A673 (cell line): ENCODE measurements at regions of chr11 and their contacts with region 1.

Region 1: DNA sequence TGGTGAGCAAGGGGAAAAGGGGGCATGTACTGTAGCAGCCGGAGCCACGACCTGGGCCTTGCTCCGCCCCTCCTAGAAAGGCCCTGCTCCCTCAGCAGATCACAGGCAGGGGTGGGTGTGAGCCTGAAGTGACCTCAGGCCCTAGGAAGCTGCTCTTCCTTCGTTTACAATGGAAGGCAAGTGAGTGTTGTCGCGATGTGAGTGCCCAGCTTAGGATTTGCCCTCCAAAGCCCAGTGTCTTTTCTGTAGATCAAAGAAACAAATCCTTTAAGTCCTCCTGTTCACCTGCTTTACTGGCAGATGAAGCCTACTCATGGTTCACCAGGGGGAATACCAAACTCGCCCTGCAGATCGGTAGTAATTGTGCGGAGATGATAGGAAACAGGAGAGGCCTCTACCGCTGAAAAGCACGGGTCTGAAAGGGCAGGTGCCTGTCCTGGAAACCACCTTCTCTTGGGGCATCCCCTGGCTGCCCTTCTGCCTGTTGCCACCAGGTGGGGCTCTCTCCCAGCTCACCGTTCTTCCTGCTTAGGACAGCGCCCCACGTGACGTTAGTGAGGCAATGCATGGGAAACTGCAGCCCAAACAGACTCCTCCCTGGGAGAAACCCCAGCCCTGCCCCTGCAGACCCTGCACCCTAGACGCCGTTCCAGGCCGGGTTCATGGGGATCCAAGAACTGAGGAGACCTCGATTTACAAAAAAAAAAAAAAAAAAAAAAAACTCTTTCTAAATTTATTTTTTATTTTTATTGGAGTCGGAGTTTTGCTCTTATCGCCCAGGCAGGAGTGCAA is 45.9 kb upstream of the RAB1B start:
- DNase-seq: peak; percentile 96
- H3K4me3 ChIP-seq: no peak overlapping the region
- H3K27ac ChIP-seq: no peak overlapping the region
- H3K4me1 ChIP-seq: no peaks in the 10 kb centered on the region
- H3K27me3 ChIP-seq: no peaks in the 10 kb centered on the region
- CTCF ChIP-seq: peak; percentile 100

Region 2: DNA sequence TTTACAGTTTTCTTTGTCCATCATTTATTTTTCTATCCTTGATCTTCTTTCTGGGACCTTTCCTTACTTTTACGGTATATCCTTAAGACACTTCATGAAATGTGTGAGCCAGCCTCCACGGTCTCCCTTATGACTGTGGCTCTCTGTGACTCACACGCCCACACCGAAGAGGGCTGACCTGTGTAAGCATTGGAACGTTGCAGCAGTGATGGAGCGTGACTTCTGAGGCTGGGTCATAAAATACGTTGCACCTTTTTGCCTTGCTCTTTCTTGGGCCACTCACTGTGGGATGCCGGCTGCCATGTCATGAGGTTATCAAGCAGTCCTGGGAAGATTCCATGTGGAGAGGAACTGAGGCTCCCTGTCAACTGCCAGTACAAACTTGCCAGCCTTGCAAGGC is 50.4 kb before region 1 on chr11:
- CTCF ChIA-PET with region 1: no interaction called
- POLR2A ChIA-PET with region 1: no interaction called
- intact Hi-C with region 1: no loop called
- DNase-seq: no peak
- H3K4me3 ChIP-seq: no peak overlapping the region
- H3K27ac ChIP-seq: no peak overlapping the region
- H3K4me1 ChIP-seq: no peaks in the 10 kb centered on the region
- H3K27me3 ChIP-seq: no peaks in the 10 kb centered on the region
- CTCF ChIP-seq: no peak

Region 3: DNA sequence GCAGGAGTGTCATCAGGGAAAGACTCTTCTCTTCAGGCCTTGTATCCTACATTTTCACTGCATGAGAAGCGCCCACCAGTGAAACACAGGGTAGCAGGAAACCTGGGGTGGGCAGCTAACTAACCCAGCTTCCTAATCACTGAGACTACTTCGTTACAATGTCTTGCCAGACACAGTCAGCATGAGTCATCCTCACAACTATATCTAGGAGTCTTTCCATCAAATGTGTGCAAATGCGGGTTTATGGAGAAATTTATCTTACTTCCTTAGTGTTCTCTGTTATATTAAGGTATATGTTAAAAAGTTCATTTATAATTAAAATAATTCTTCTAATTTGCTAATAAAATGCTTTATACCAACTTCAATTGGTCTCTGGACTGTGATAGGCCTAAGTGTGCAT is 34.0 kb before region 1 on chr11:
- CTCF ChIA-PET with region 1: interaction called, 11 read pairs
- POLR2A ChIA-PET with region 1: no interaction called
- intact Hi-C with region 1: no loop called
- DNase-seq: peak; percentile 36
- H3K4me3 ChIP-seq: no peak overlapping the region
- H3K27ac ChIP-seq: no peak overlapping the region
- H3K4me1 ChIP-seq: peaks cover 16% of the 10 kb centered on the region
- H3K27me3 ChIP-seq: no peaks in the 10 kb centered on the region
- CTCF ChIP-seq: no peak

Region 4: DNA sequence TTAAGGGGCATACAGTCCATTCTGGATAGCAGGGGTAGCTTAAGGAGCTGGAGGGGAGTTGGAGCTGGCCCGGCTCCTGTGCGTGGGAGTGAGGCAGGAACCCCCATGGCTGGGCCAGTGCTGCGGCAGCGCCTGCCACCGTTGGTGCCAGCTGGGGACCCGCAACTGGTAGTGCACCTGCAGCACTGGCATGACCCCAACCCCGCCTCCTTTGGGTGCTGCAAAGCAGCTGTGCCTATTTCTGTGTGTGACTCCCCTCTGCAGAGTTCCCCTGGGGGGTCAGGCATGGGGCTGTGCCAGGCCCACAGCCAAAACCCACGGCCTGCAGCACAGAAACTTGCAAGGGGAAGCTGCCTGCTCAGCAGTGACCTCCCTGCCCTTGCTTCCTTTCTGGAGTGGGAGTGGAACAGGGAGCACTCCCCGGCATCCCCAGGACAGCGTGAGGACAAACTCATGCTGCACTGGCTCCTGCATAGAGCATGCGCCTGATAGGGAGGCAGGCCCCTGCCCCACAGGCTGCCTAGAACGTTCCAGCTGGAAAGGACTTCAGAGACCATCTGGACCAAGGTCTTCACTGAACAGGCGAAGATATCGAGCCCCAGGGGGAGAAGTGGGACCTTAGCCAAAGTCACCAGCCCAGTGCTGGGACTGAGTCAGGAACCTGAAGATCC is 19.7 kb after region 1 on chr11:
- CTCF ChIA-PET with region 1: interaction called, 3 read pairs
- POLR2A ChIA-PET with region 1: interaction called, 20 read pairs
- intact Hi-C with region 1: no loop called
- DNase-seq: no peak
- H3K4me3 ChIP-seq: no peak overlapping the region
- H3K27ac ChIP-seq: no peak overlapping the region
- H3K4me1 ChIP-seq: no peaks in the 10 kb centered on the region
- H3K27me3 ChIP-seq: no peaks in the 10 kb centered on the region
- CTCF ChIP-seq: no peak

Region 5: GRCh38 chr11:66258473-66258893 is 35.9 kb after region 1 on chr11:
- CTCF ChIA-PET with region 1: interaction called, 3 read pairs
- POLR2A ChIA-PET with region 1: no interaction called
- intact Hi-C with region 1: loop called (anchors 1 kb)
- DNase-seq: no peak
- H3K4me3 ChIP-seq: peak overlapping the region; percentile 99
- H3K27ac ChIP-seq: peak overlapping the region; percentile 73
- H3K4me1 ChIP-seq: peaks cover 12% of the 10 kb centered on the region
- H3K27me3 ChIP-seq: no peaks in the 10 kb centered on the region
- CTCF ChIP-seq: peak; percentile 44

Region 6: DNA sequence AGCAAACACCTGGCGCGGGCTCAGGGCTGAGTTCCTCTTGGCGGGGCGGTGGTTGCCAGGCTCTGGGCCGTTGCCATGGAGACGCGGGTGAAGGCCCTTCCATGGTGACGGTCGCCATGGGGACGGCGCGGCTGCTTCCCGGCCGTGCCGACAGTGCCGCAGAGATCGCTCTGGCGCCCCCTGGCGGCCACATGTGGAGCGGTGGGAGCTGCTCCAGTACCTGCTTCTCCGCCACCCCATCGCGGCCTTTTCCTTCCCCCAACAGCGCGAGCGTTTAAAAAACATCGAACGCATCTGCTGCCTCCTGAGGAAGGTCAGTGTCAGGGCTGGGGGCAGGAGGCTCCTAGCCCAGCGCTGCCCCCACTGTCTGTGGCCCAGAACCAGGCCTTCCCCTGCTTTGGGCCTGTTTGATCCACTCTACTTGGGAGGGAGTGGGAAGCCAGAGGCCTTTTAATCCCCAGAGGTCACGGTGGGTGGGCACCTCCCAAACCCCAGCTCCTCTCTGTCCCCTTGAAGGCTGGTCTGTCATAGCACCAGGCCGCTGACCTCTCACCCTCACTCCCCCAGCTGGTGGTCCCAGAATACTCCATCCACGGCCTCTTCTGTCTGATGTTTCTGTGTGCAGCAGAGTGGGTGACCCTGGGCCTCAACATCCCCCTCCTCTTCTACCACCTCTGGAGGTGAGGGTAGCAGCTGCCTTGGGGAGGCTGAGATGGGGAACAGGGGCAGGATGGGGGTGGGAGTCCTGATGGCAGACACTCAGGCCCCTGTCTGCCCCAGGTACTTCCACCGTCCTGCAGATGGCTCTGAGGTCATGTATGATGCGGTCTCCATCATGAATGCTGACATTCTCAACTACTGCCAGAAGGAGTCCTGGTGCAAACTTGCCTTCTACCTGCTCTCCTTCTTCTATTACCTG is 60.2 kb after region 1 on chr11:
- CTCF ChIA-PET with region 1: no interaction called
- POLR2A ChIA-PET with region 1: no interaction called
- intact Hi-C with region 1: loop called (anchors 1 kb)
- DNase-seq: peak; percentile 99
- H3K4me3 ChIP-seq: no peak overlapping the region
- H3K27ac ChIP-seq: no peak overlapping the region
- H3K4me1 ChIP-seq: peaks cover 27% of the 10 kb centered on the region
- H3K27me3 ChIP-seq: no peaks in the 10 kb centered on the region
- CTCF ChIP-seq: peak; percentile 99

Region 7: GRCh38 chr11:66328307-66329144 is 106.0 kb after region 1 on chr11:
- CTCF ChIA-PET with region 1: no interaction called
- POLR2A ChIA-PET with region 1: no interaction called
- intact Hi-C with region 1: loop called (anchors 5 kb)
- DNase-seq: peak; percentile 95
- H3K4me3 ChIP-seq: no peak overlapping the region
- H3K27ac ChIP-seq: peak overlapping the region; percentile 59
- H3K4me1 ChIP-seq: peaks cover 24% of the 10 kb centered on the region
- H3K27me3 ChIP-seq: no peaks in the 10 kb centered on the region
- CTCF ChIP-seq: peak; percentile 100